ENCODE measurements at regions of chr1 and their contacts with region 1.

Region 1: GRCh38 chr1:160193091-160193819 is 2.9 kb downstream of the CASQ1 start:
- DNase-seq: peak; percentile 40
- H3K4me3 ChIP-seq: no peak overlapping the region
- H3K27me3 ChIP-seq: peaks cover 2% of the 10 kb centered on the region; the same call in 1 of the 2 replicates
- CTCF ChIP-seq: peak; percentile 94

Region 2: GRCh38 chr1:160169553-160170399 is 23.5 kb before region 1 on chr1:
- CTCF ChIA-PET with region 1: interaction called, 12 read pairs
- POLR2A ChIA-PET with region 1: no interaction called
- DNase-seq: no peak
- H3K4me3 ChIP-seq: no peak overlapping the region
- H3K27me3 ChIP-seq: peaks cover 3% of the 10 kb centered on the region; the same call in 1 of the 2 replicates
- CTCF ChIP-seq: no peak

Region 3: GRCh38 chr1:160205242-160206035 is 12.2 kb after region 1 on chr1 and contains the start of gene PEA15:
- CTCF ChIA-PET with region 1: interaction called, 43 read pairs
- POLR2A ChIA-PET with region 1: interaction called, 9 read pairs
- DNase-seq: no peak
- H3K4me3 ChIP-seq: peak within 1 kb of the TSS; percentile 97
- H3K27me3 ChIP-seq: no peaks in the 10 kb centered on the region
- CTCF ChIP-seq: no peak
- polyA plus RNA-seq, gene PEA15: 937 and 1,035 TPM in 2 replicates

Region 4: GRCh38 chr1:160219062-160219929 is 26.0 kb after region 1 on chr1:
- CTCF ChIA-PET with region 1: interaction called, 113 read pairs
- POLR2A ChIA-PET with region 1: interaction called, 4 read pairs
- DNase-seq: peak; percentile 50
- H3K4me3 ChIP-seq: no peak overlapping the region
- H3K27me3 ChIP-seq: no peaks in the 10 kb centered on the region
- CTCF ChIP-seq: peak; percentile 74

Region 5: DNA sequence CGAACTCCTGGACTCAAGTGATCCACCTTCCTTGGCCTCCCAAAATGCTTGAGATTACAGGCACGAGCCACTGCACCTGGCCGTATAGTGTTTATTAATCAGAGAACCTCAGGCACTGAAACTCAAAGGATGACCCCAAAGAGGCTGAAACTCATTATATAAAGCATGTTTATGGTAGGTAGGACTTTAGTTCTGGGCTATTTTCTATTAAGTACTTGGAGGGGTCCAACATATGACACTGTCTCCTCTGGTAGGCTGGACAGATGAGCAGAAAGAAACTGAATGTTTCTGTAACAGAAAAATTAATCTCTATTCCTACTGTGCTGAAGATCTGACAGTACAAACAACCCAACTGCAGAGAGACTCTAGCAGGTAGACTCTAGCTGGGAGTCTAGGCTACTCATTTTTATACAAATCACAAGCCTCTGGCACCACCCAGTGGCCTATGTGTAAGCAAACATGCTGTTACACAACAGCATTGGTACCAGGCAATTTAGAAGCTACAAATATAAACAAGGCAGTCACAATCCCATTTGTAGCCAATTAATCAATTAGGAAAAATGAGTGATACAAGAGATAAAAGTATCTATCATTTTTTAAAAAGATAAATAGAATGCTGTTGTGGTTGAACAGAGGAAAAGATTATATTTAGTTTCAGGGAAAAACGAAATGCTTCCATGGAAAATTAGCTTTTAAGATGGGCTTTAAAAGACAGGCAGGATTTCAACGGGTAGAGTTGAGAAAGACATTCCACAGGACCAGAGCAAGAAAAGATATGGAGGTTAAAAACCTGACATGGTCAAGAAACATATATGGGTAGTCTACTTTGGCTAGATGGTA is 58.7 kb after region 1 on chr1:
- CTCF ChIA-PET with region 1: interaction called, 98 read pairs
- POLR2A ChIA-PET with region 1: no interaction called
- DNase-seq: peak; percentile 17
- H3K4me3 ChIP-seq: no peak overlapping the region
- H3K27me3 ChIP-seq: no peaks in the 10 kb centered on the region
- CTCF ChIP-seq: peak; percentile 70

Region 6: DNA sequence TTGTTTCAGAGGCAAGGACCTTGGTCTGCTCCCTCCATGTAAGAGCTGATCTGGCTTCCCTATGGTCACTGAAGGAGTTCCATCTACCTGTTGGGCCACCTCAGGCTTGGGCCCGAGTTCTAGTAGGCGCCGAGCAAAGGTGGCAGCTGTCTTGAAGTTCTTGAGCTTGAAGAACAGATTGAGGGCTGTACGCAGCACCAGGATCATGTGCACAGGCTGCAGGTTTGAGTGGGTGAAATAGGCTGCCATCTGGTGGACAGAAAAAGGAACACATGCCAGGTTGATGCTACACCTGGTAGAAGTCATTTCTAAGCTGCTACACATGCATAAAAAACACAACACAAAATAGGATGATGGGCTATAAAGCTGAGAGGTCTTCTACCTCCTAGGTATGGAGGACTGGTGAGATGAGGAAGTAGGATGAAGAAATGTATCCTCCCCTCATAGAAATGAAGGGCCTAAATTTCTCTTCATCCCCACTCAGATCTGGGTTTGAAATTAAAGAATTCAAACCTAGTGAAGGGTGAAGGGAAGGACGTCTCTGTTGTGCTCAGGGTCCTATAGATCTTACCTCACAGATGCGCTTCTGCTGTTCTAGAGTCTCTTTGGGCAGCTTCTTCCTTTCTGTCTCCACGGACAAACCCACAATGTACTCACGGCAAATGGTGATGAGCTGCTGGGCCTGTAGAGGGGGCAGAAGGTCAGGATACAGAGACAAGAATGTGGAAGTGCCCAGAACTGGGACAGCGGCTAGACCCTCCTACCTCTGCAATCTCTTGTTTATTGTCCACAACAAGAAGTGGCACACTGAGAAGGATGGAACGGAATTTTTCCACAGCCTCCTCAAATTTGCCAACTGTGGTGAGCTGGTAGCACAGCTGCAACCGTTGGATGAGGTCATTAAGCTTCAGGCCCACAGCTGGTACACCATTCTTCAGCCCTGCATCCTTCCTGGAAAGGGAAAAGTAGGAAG is 98.3 kb after region 1 on chr1:
- CTCF ChIA-PET with region 1: interaction called, 42 read pairs
- POLR2A ChIA-PET with region 1: no interaction called
- DNase-seq: no peak
- H3K4me3 ChIP-seq: no peak overlapping the region
- H3K27me3 ChIP-seq: no peaks in the 10 kb centered on the region
- CTCF ChIP-seq: peak; percentile 80

Region 7: GRCh38 chr1:160453443-160453842 is 260.2 kb after region 1 on chr1:
- CTCF ChIA-PET with region 1: no interaction called
- POLR2A ChIA-PET with region 1: no interaction called
- DNase-seq: no peak
- H3K4me3 ChIP-seq: no peak overlapping the region
- H3K27me3 ChIP-seq: no peaks in the 10 kb centered on the region
- CTCF ChIP-seq: no peak

Measured in BJ (cell line).